Prostate gland (tissue), 2 donors: ENCODE measurements at regions of chr9 and their contacts with region 1.

Region 1: GRCh38 chr9:80797831-80798688 is 891.3 kb downstream of the TLE1 start:
- DNase-seq: peak; percentile 52
- H3K4me3 ChIP-seq: no peak overlapping the region
- H3K27ac ChIP-seq: peak overlapping the region; percentile 15 to 38
- H3K4me1 ChIP-seq: no peaks in the 10 kb centered on the region
- H3K27me3 ChIP-seq: no peaks in the 10 kb centered on the region
- CTCF ChIP-seq: no peak
- POLR2A ChIP-seq: no peak

Region 2: DNA sequence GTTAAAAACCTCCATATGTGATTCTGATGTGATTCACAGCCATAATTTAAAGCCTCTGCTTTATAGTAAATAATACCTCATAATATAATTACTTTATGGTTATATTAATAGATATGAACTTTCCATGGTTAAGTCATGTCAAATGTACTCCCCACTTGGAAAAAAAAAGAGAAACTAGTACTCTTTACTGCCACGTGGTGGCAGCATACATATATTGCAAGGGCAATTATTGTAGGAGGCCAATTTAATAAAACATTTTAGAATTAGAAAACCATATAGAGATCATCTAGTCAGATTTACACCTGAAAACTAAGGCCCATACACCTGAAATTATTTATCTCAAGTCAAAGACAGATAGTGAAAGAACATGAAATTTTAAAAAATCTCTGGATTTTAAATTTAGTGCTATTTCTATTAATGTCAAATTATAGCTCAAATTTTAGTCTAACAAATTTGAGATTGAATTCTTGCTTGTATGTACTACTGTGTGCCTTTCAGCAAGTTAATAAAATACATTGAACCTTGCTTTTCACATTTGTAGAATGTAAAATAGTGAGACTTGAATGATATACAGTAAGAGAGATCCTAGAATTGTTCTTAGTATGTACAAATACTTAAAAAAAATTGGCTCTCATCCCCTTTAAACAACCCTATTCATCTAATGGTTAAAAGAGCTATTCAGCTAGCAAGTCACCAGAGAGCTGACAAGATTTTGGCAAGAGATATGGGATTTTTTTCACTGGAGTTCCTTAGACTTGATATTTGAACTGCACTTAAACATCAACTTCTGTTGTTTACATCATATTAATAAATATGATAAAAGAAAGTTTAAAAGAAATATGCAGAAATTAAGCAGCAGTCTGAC is 622.5 kb before region 1 on chr9:
- intact Hi-C with region 1: no loop called
- DNase-seq: no peak
- H3K4me3 ChIP-seq: no peak overlapping the region
- H3K27ac ChIP-seq: no peak overlapping the region
- H3K4me1 ChIP-seq: no peaks in the 10 kb centered on the region
- H3K27me3 ChIP-seq: peaks cover 3% of the 10 kb centered on the region
- CTCF ChIP-seq: peak; percentile 35 to 69 (median 66)
- POLR2A ChIP-seq: no peak

Region 3: GRCh38 chr9:80937645-80938044 is 139.6 kb after region 1 on chr9:
- intact Hi-C with region 1: loop called (anchors 5 kb)
- DNase-seq: no peak
- H3K4me3 ChIP-seq: no peak overlapping the region
- H3K27ac ChIP-seq: no peak overlapping the region
- H3K4me1 ChIP-seq: no peaks in the 10 kb centered on the region
- H3K27me3 ChIP-seq: no peaks in the 10 kb centered on the region
- CTCF ChIP-seq: no peak
- POLR2A ChIP-seq: no peak

Region 4: GRCh38 chr9:80995759-80996158 is 197.7 kb after region 1 on chr9:
- intact Hi-C with region 1: no loop called
- DNase-seq: no peak
- H3K4me3 ChIP-seq: no peak overlapping the region
- H3K27ac ChIP-seq: no peak overlapping the region
- H3K4me1 ChIP-seq: no peaks in the 10 kb centered on the region
- H3K27me3 ChIP-seq: no peaks in the 10 kb centered on the region
- CTCF ChIP-seq: no peak
- POLR2A ChIP-seq: no peak

Region 5: DNA sequence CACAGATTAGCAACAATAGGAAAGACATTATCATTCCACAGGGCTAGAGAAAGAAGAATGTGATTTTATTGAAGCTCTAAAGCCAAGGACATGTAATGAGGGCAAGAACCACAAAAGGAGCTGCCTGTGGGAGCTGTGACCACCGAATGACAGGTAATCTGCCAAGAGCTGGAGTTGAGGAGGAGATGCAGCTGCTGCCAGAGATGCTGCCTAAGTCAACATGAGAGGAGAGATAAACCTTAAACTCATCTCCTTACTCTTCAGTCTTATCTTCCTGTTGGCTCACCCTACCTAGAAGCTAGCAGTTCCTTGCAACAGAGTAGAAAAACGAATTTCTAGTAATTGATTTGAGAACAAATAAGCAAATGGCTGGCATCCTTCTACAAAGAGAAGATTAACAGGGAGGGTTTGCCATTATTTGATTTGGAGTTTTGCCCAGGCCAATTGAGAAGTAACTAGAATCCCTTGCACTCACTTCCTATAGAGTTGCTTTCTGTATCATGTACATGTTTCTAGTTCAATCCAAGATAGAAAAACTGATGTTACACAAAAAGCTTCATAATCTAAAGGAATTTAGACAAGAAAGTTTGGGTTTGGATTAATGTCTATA is 352.1 kb after region 1 on chr9:
- intact Hi-C with region 1: no loop called
- DNase-seq: no peak
- H3K4me3 ChIP-seq: no peak overlapping the region
- H3K27ac ChIP-seq: no peak overlapping the region
- H3K4me1 ChIP-seq: no peaks in the 10 kb centered on the region
- H3K27me3 ChIP-seq: no peaks in the 10 kb centered on the region
- CTCF ChIP-seq: no peak
- POLR2A ChIP-seq: no peak

Region 6: GRCh38 chr9:81492710-81493447 is 694.8 kb after region 1 on chr9:
- intact Hi-C with region 1: loop called (anchors 10 kb)
- DNase-seq: no peak
- H3K4me3 ChIP-seq: no peak overlapping the region
- H3K27ac ChIP-seq: no peak overlapping the region
- H3K4me1 ChIP-seq: no peaks in the 10 kb centered on the region
- H3K27me3 ChIP-seq: no peaks in the 10 kb centered on the region
- CTCF ChIP-seq: no peak
- POLR2A ChIP-seq: no peak

Region 7: DNA sequence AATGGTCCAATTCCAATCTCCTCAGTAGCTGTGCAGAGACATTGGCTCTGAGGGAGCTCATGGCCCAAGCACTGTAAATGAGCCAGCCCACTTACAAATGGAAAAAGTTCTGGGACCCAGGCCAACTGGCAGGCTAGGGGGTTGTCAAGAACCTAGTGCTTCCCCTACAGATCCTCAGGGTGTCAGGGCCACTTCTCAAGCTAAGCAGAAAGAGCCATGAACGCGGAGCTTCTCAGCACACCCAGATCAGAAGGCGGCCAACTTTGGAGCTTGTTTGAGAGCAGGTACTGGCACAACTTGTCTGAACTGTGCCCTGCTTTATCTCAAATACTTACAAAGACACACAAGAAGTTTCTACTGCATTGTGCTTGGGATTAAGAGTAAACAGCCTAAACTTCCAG is 873.8 kb after region 1 on chr9:
- intact Hi-C with region 1: loop called (anchors 5 kb)
- DNase-seq: peak; percentile 58
- H3K4me3 ChIP-seq: no peak overlapping the region
- H3K27ac ChIP-seq: no peak overlapping the region
- H3K4me1 ChIP-seq: peaks cover 4% of the 10 kb centered on the region
- H3K27me3 ChIP-seq: no peaks in the 10 kb centered on the region
- CTCF ChIP-seq: no peak
- POLR2A ChIP-seq: no peak